HCT116 (cell line): ENCODE measurements at regions of chr21 and their contacts with region 1.

Region 1: GRCh38 chr21:33199516-33200217 is 30.1 kb upstream of the IFNAR2 start:
- DNase-seq: peak; percentile 88
- ATAC-seq: peak; percentile 80
- H3K4me3 ChIP-seq: no peak overlapping the region
- H3K27ac ChIP-seq: no peak overlapping the region
- H3K4me1 ChIP-seq: peaks cover 6 to 30% of the 10 kb centered on the region in 2 experiments
- H3K27me3 ChIP-seq: no peaks in the 10 kb centered on the region
- CTCF ChIP-seq: peak; percentile 71 to 86 (median 79)
- POLR2A ChIP-seq: no peak
- RAD21 ChIP-seq: peak; percentile 94

Region 2: DNA sequence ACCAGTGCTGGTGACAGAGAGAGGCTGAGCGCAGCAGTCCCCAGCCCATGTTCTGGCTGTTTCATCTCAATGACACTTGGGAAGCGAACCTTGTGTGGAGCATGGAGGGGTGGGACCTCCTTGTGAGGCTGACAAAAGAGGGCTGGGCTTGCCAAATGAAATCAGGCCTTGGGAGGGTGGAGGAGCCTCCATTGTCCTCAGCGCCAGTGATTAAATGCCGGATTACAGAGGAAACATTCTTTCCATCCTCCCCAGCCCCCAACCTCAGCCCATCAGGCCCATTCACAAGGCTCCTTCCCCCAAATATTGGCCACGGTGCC is 364.8 kb before region 1 on chr21:
- CTCF ChIA-PET with region 1: interaction called, 25 read pairs
- POLR2A ChIA-PET with region 1: no interaction called
- RAD21 ChIA-PET with region 1: no interaction called
- intact Hi-C with region 1: loop called (anchors 2 kb)
- DNase-seq: no peak
- ATAC-seq: no peak
- H3K4me3 ChIP-seq: no peak overlapping the region
- H3K27ac ChIP-seq: no peak overlapping the region
- H3K4me1 ChIP-seq: no peaks in the 10 kb centered on the region
- H3K27me3 ChIP-seq: peaks cover 7% of the 10 kb centered on the region
- CTCF ChIP-seq: no peak
- POLR2A ChIP-seq: no peak
- RAD21 ChIP-seq: no peak

Region 3: DNA sequence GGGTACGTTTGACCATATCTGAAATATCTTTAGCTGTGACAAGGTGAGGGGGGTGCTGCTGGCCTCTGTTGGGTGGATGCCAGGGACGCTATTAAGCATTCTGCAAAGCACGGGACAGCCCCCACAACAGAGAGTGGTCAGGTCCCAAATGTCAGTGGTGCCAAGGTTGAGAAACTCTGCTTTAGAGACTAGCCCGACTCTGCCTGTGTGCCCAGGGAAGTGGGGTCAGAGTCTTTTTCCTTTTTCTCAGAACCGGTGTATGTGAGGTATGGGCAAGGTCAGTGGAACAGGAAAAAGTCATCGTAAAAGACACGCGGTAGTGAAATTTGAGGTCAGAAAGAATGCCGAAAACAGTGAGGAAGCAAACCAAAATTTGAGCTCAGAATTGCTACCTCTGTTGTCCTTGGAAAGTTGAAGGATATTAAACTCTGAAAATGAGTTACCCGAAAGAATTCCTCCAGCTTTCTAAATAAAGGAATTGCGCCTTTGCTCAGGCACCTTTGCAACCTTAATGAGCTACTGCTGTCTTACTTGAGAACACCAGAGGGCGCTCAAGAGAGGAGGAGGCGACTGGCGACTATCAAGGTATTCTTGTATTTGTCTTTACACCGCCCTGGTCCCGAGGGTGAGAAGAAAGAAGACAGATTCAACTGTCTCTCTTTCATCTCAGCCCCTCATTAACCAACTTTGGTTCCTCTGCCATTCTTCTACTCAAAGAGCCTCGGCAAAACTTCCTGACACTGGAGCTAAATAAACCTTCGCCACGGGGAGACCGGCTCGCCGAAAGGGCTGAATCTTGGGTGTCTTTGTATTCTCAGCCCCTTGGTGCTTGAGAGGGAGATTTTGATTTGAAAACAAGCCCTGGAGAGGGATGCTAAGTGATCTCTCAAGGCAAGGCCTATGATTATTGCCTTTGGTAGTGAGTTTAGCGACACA is 259.3 kb before region 1 on chr21:
- CTCF ChIA-PET with region 1: interaction called, 22 read pairs
- POLR2A ChIA-PET with region 1: no interaction called
- RAD21 ChIA-PET with region 1: interaction called, 4 read pairs
- intact Hi-C with region 1: loop called (anchors 1 kb)
- DNase-seq: peak; percentile 40
- ATAC-seq: peak; percentile 93
- H3K4me3 ChIP-seq: no peak overlapping the region
- H3K27ac ChIP-seq: no peak overlapping the region
- H3K4me1 ChIP-seq: 0 out of 4 replicates have a peak, but pooled peaks cover 0 to 6% of the 10 kb centered on the region in 2 experiments
- H3K27me3 ChIP-seq: peaks cover 12% of the 10 kb centered on the region; the same call in 1 of the 2 replicates
- CTCF ChIP-seq: peak; percentile 66 to 92 (median 90); a peak in 5 of 6 replicates
- POLR2A ChIP-seq: no peak
- RAD21 ChIP-seq: peak; percentile 63

Region 4: DNA sequence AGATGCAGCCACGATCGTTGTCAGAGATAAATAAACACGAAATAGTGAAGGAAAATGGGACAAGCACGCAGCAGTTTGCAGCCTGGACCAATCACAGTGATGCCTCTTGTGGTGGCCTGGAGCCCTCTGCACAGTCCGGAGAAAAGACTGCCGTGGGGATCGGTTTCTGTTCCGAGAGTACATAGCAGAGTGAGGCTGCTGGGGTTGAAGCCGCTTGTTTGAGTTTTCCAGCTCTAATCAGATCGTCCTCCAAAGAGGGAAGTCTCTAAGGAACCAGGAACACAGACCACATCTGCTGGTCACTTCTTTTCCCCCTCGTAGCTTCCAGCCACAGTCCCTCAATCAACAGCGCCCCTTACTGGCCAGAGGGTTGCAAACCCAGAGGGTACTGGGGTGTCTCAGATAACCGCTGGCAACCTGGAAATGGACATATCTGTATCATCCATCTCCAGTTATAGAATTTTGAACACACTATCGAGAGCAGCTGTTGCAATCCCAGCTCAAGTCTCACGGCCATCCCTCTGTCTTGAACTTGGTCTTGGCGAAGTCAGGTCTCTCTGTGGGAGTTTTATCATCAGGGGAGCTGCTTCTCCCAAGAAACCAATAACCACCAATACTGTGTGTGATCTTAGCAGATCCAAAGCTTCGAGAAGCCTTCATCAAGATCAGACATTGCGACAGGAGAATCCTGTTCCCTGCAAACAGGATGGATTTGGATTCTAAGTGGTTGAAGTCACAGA is 72.3 kb before region 1 on chr21:
- CTCF ChIA-PET with region 1: interaction called, 7 read pairs
- POLR2A ChIA-PET with region 1: no interaction called
- RAD21 ChIA-PET with region 1: interaction called in 1 of 2 experiments, 3 read pairs
- intact Hi-C with region 1: loop called (anchors 5 kb)
- DNase-seq: peak; percentile 48
- ATAC-seq: peak; percentile 96
- H3K4me3 ChIP-seq: peak overlapping the region; percentile 44 to 57
- H3K27ac ChIP-seq: no peak overlapping the region
- H3K4me1 ChIP-seq: peaks cover 0 to 5% of the 10 kb centered on the region in 2 experiments; a peak in 1 of 4 replicates
- H3K27me3 ChIP-seq: peaks cover 4% of the 10 kb centered on the region; the same call in 1 of the 2 replicates
- CTCF ChIP-seq: peak; percentile 95 to 98 (median 96)
- POLR2A ChIP-seq: no peak
- RAD21 ChIP-seq: peak; percentile 89

Region 5: DNA sequence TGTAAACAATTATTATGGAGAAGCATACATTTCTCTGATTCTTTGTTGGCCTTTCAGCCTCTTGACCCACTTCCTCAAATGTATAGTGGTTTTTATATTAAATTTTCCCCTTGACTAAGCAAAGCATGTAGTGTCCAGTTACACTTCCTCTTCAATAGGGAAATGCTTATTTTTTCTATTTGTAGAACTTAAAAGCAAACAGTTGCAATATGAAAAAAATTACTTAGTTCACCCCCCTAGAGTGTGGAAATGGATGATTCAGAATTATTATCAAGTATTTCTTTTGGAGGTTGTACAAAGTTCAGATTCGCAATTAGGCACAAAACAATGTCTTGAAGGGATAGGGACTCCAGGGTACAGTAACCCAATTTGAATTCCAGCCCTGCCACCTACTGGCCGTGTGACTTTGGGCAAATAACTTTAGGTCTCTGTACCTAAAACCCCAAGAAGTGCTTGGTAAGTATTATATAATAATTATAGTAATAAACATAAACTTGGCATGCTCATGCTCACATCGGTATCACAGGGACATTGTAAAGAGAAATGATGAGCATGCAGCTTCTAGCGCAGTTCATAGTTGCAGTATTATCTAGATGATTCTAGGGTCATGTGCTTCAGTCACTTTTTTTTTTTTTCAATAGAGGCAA is 174.9 kb after region 1 on chr21:
- CTCF ChIA-PET with region 1: interaction called, 5 read pairs
- POLR2A ChIA-PET with region 1: no interaction called
- RAD21 ChIA-PET with region 1: interaction called, 3 to 4 read pairs
- intact Hi-C with region 1: loop called (anchors 2 kb)
- DNase-seq: peak; percentile 53
- ATAC-seq: peak; percentile 93
- H3K4me3 ChIP-seq: no peak overlapping the region
- H3K27ac ChIP-seq: no peak overlapping the region
- H3K4me1 ChIP-seq: peaks cover 15 to 26% of the 10 kb centered on the region in 2 experiments
- H3K27me3 ChIP-seq: no peaks in the 10 kb centered on the region
- CTCF ChIP-seq: peak in 2 of 3 experiments; percentile 68 to 82; a peak in 4 of 6 replicates
- POLR2A ChIP-seq: no peak
- RAD21 ChIP-seq: no peak

Region 6: GRCh38 chr21:33608559-33608958 is 408.9 kb after region 1 on chr21:
- CTCF ChIA-PET with region 1: interaction called, 18 read pairs
- POLR2A ChIA-PET with region 1: no interaction called
- RAD21 ChIA-PET with region 1: interaction called, 3 to 5 read pairs
- intact Hi-C with region 1: loop called (anchors 2 kb)
- DNase-seq: no peak
- ATAC-seq: no peak
- H3K4me3 ChIP-seq: no peak overlapping the region
- H3K27ac ChIP-seq: no peak overlapping the region
- H3K4me1 ChIP-seq: no peaks in the 10 kb centered on the region
- H3K27me3 ChIP-seq: no peaks in the 10 kb centered on the region
- CTCF ChIP-seq: no peak
- POLR2A ChIP-seq: no peak
- RAD21 ChIP-seq: no peak